ENCODE measurements at regions of chr13 and their contacts with region 1.

Region 1: GRCh38 chr13:37640499-37640898 is 41.9 kb upstream of the POSTN start:
- DNase-seq: peak; percentile 79
- H3K4me3 ChIP-seq: no peak overlapping the region
- H3K27ac ChIP-seq: no peak overlapping the region
- H3K4me1 ChIP-seq: no peaks in the 10 kb centered on the region
- H3K27me3 ChIP-seq: no peaks in the 10 kb centered on the region
- CTCF ChIP-seq: peak; percentile 47 to 56
- POLR2A ChIP-seq: no peak

Region 2: DNA sequence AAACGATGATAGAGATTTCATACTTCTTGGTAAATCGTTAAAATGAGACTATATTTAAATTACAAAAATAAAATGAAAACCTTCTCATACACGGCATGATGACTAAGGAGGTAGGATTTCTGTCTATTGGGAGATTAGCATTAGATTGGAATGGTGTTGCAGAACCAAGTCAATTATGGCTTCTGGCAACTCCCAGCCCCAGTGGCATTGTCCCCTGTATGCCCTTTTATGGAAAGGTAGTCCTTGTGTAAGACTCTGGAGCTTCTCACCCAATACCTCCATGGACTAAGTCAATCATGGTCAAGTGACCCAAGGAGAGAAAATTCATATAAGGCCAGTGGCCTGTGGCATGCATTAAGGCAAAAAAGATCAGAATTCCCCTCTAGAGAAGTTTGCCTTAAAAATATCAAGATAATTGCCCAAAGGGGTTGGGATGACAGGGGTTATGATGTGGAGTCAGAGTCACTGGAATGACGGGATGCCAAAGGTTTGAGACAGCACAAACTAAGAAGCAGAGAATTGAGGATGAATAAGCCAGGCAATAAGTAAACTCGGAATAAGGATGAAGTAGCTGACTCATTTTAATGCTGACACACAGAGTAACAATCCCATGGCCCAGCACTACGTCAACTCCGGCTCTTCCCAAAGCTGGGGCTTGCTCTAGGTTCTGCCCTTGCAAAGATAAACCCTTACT is 15.9 kb after region 1 on chr13:
- CTCF ChIA-PET with region 1: interaction called, 13 read pairs
- POLR2A ChIA-PET with region 1: no interaction called
- dilution Hi-C with region 1: no loop called
- intact Hi-C with region 1: no loop called
- DNase-seq: peak; percentile 86
- H3K4me3 ChIP-seq: no peak overlapping the region
- H3K27ac ChIP-seq: peak overlapping the region; percentile 99
- H3K4me1 ChIP-seq: peaks cover 23% of the 10 kb centered on the region
- H3K27me3 ChIP-seq: no peaks in the 10 kb centered on the region
- CTCF ChIP-seq: no peak
- POLR2A ChIP-seq: no peak

Region 3: GRCh38 chr13:37715606-37716015 is 75.1 kb after region 1 on chr13:
- CTCF ChIA-PET with region 1: no interaction called
- POLR2A ChIA-PET with region 1: no interaction called
- dilution Hi-C with region 1: no loop called
- intact Hi-C with region 1: loop called (anchors 1 kb)
- DNase-seq: peak; percentile 93
- H3K4me3 ChIP-seq: no peak overlapping the region
- H3K27ac ChIP-seq: peak overlapping the region; percentile 90
- H3K4me1 ChIP-seq: peaks cover 28% of the 10 kb centered on the region
- H3K27me3 ChIP-seq: no peaks in the 10 kb centered on the region
- CTCF ChIP-seq: no peak
- POLR2A ChIP-seq: peak; percentile 32

Region 4: DNA sequence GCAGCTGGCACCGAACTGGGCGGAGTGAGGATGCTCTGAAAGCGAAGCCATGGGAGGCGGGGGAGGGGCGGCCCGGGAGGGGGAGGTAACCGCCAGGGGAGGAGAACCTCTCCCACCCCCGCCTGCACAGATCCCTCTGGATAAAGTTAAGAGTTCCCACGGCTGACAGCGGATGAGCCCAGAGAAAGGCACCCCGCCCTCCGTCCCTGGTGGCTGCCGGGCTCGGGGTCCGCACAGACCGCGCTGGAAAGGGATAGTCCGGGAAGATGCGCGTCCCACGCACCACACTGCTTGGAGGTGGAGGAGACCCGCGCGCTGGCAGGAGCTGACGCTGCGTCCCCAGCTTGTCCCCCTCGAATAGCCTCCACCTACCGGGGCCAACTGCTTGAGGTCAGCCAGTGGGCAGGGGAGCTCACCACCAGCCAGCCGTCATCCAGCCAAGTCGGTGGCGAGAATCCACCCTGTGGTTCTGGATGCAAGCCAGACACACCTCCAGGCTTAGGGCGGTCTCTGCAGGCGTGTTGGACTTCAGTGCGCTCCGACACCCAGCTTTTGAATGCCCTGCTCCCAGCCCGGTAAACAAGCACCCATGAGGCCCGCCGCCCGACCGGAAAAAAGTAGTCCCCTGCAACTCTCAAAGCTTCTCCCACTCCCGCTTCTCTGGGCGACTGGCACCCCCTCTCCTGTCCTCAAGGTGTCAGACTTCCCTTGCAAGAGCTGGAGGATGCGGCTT is 229.4 kb after region 1 on chr13 and contains the start of gene TRPC4:
- CTCF ChIA-PET with region 1: interaction called, 34 read pairs
- POLR2A ChIA-PET with region 1: no interaction called
- dilution Hi-C with region 1: no loop called
- intact Hi-C with region 1: loop called (anchors 1 kb)
- DNase-seq: peak; percentile 22
- H3K4me3 ChIP-seq: peak within 1 kb of the TSS; percentile 22 to 84 (median 66)
- H3K27ac ChIP-seq: no peak within 1 kb of the TSS
- H3K4me1 ChIP-seq: peaks cover 21% of the 10 kb centered on the region
- H3K27me3 ChIP-seq: peaks cover 16 to 24% of the 10 kb centered on the region in 2 experiments
- CTCF ChIP-seq: peak; percentile 11 to 16
- POLR2A ChIP-seq: no peak
- total RNA-seq, gene TRPC4: 0.42 and 0.64 TPM in 2 replicates

Region 5: GRCh38 chr13:38045307-38046048 is 405.0 kb after region 1 on chr13:
- CTCF ChIA-PET with region 1: interaction called, 55 read pairs
- POLR2A ChIA-PET with region 1: no interaction called
- dilution Hi-C with region 1: no loop called
- intact Hi-C with region 1: loop called (anchors 1 kb)
- DNase-seq: peak; percentile 40
- H3K4me3 ChIP-seq: no peak overlapping the region
- H3K27ac ChIP-seq: no peak overlapping the region
- H3K4me1 ChIP-seq: no peaks in the 10 kb centered on the region
- H3K27me3 ChIP-seq: no peaks in the 10 kb centered on the region
- CTCF ChIP-seq: peak; percentile 61 to 73
- POLR2A ChIP-seq: no peak

Region 6: GRCh38 chr13:38582133-38582532 is 941.6 kb after region 1 on chr13:
- CTCF ChIA-PET with region 1: interaction called, 46 read pairs
- POLR2A ChIA-PET with region 1: no interaction called
- dilution Hi-C with region 1: no loop called
- intact Hi-C with region 1: loop called (anchors 2 kb)
- DNase-seq: peak; percentile 24
- H3K4me3 ChIP-seq: no peak overlapping the region
- H3K27ac ChIP-seq: no peak overlapping the region
- H3K4me1 ChIP-seq: no peaks in the 10 kb centered on the region
- H3K27me3 ChIP-seq: no peaks in the 10 kb centered on the region
- CTCF ChIP-seq: peak; percentile 13 to 14
- POLR2A ChIP-seq: no peak

Region 7: GRCh38 chr13:38914070-38914469 is 1273.6 kb after region 1 on chr13:
- CTCF ChIA-PET with region 1: interaction called, 4 read pairs
- POLR2A ChIA-PET with region 1: no interaction called
- dilution Hi-C with region 1: no loop called
- intact Hi-C with region 1: loop called (anchors 10 kb)
- DNase-seq: no peak
- H3K4me3 ChIP-seq: no peak overlapping the region
- H3K27ac ChIP-seq: no peak overlapping the region
- H3K4me1 ChIP-seq: no peaks in the 10 kb centered on the region
- H3K27me3 ChIP-seq: peaks cover 0 to 3% of the 10 kb centered on the region in 2 experiments
- CTCF ChIP-seq: no peak
- POLR2A ChIP-seq: no peak

Measured in endothelial cell of umbilical vein (primary cell).